ENCODE measurements at regions of chr5 and their contacts with region 1.

Region 1: DNA sequence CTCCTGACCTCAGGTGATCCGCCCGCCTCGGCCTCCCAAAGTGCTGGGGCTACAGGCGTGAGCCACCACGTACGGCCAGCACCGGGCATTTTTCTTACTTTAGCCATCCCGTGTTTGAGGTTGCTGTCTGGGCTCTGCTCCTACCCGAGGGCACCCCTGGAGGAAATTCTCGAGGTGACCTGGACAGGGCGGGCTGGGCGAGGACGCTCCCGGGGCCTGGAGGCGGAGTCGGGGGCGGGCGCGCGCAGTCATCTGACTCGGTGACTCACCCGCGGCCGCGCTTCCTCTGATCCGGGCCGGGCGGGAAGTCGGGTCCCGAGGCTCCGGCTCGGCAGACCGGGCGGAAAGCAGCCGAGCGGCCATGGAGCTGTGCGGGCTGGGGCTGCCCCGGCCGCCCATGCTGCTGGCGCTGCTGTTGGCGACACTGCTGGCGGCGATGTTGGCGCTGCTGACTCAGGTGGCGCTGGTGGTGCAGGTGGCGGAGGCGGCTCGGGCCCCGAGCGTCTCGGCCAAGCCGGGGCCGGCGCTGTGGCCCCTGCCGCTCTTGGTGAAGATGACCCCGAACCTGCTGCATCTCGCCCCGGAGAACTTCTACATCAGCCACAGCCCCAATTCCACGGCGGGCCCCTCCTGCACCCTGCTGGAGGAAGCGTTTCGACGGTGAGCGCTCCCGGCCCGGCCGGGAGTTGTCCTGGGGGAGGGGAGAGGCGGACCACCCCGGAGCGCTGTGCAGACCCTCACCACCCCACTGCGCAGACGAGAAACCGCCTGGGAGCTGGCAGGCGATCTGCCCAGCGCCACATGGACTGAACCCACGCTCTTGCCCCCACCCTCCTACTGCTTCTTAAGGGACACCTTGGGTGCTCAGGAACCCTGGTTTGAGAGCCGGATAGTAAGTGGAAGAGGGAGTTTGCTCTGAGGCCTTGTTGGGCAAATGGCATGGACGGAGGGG is at the start of gene HEXB:
- DNase-seq: peak; percentile 93 to 94
- ATAC-seq: peak; percentile 97 to 99 (median 98)
- H3K4me3 ChIP-seq: peak within 1 kb of the TSS; percentile 85
- H3K27ac ChIP-seq: peak within 1 kb of the TSS; percentile 88
- H3K4me1 ChIP-seq: peaks cover 23% of the 10 kb centered on the region
- H3K27me3 ChIP-seq: peaks cover 0 to 3% (median 0%) of the 10 kb centered on the region in 3 donors
- CTCF ChIP-seq: no peak
- total RNA-seq, gene HEXB: 48.1 to 63.3 (median 50.3) TPM

Region 2: GRCh38 chr5:74766849-74767578 is 81.8 kb after region 1 on chr5 and contains the starts of genes GFM2 and NSA2:
- intact Hi-C with region 1: loop called in 1 of 2 experiments (anchors 2 kb)
- DNase-seq: peak; percentile 92 to 95
- ATAC-seq: peak; percentile 98 to 99 (median 98)
- H3K4me3 ChIP-seq: peak within 1 kb of the TSS; percentile 93
- H3K27ac ChIP-seq: peak within 1 kb of the TSS; percentile 87
- H3K4me1 ChIP-seq: peaks cover 29% of the 10 kb centered on the region
- H3K27me3 ChIP-seq: no peaks in the 10 kb centered on the region
- CTCF ChIP-seq: no peak
- total RNA-seq, gene GFM2: 17.8 to 47.2 (median 29.7) TPM
- total RNA-seq, gene NSA2: 43.5 to 71.9 (median 54.2) TPM